Mammary epithelial cell (primary cell): ENCODE measurements at regions of chr19 and their contacts with region 1.

Region 1: DNA sequence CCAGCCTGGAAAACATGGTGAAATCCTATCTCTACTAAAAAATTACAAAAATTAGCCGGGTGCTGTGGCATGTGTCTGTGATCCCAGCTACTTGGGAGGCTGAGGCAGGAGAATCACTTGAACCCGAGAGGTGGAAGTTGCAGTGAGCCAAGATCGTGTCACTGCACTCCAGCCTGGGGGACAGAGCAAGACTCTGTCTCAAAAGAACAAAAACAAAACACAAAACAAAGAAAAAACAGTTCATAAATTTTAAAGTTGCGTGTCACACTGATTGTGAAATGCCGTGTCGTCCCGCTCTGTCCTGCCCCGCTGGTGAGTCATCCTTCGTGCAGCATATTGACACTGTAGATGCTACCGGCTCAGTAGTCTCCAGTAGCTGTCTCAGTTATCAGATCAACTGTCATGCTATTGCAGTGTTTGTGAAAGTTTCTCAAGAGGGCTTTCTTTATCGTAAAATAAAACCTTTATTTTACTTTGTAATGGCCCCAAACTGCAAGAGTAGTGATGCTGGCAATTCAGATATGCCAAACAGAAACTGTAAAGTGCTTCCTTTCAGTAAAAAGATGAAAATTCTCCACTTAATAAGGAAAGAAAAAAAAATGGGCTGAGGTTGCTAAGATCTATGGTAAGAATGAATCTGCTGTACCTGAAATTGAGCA is 36.4 kb upstream of the IGFL1 start:
- DNase-seq: peak; percentile 86
- H3K4me3 ChIP-seq: no peak overlapping the region
- H3K27ac ChIP-seq: peak overlapping the region; percentile 51
- H3K4me1 ChIP-seq: peaks cover 43% of the 10 kb centered on the region
- H3K27me3 ChIP-seq: no peaks in the 10 kb centered on the region
- CTCF ChIP-seq: no peak

Region 2: GRCh38 chr19:46025835-46026234 is 167.3 kb before region 1 on chr19:
- CTCF ChIA-PET with region 1: interaction called, 3 read pairs
- dilution Hi-C with region 1: no loop called
- in situ Hi-C with region 1: loop called in 1 of 2 experiments (anchors 5 kb)
- intact Hi-C with region 1: loop called (anchors 1 kb)
- DNase-seq: no peak
- H3K4me3 ChIP-seq: no peak overlapping the region
- H3K27ac ChIP-seq: no peak overlapping the region
- H3K4me1 ChIP-seq: peaks cover 10% of the 10 kb centered on the region
- H3K27me3 ChIP-seq: no peaks in the 10 kb centered on the region
- CTCF ChIP-seq: no peak